Activated CD4-positive, alpha-beta T cell treated with anti-CD3 and anti-CD28 coated beads for 36 hours (primary cell): ENCODE measurements at regions of chr6 and their contacts with region 1.

Region 1: GRCh38 chr6:109382576-109383437 is 540 bp upstream of the CD164 start:
- DNase-seq: peak; percentile 95
- ATAC-seq: peak; percentile 67
- H3K4me3 Mint-ChIP-seq: peak overlapping the region; percentile 98
- H3K27ac Mint-ChIP-seq: peak overlapping the region; percentile 99
- H3K4me1 Mint-ChIP-seq: peaks cover 25% of the 10 kb centered on the region
- H3K27me3 Mint-ChIP-seq: no peaks in the 10 kb centered on the region

Region 2: GRCh38 chr6:107957909-107958688 is 1424.7 kb before region 1 on chr6 and contains the start of gene SEC63:
- CTCF ChIA-PET with region 1: no interaction called
- POLR2A ChIA-PET with region 1: no interaction called
- intact Hi-C with region 1: loop called in 1 of 2 experiments (anchors 1 kb)
- DNase-seq: peak; percentile 98
- ATAC-seq: peak; percentile 98
- H3K4me3 Mint-ChIP-seq: peak within 1 kb of the TSS; percentile 100
- H3K27ac Mint-ChIP-seq: peak within 1 kb of the TSS; percentile 99
- H3K4me1 Mint-ChIP-seq: peaks cover 36% of the 10 kb centered on the region
- H3K27me3 Mint-ChIP-seq: peaks cover 2% of the 10 kb centered on the region
- total RNA-seq, gene SEC63: 98.7 to 100 TPM

Region 3: GRCh38 chr6:108921547-108922361 is 461.1 kb before region 1 on chr6:
- CTCF ChIA-PET with region 1: no interaction called
- POLR2A ChIA-PET with region 1: interaction called, 3 read pairs
- intact Hi-C with region 1: loop called in 1 of 2 experiments (anchors 5 kb)
- DNase-seq: peak; percentile 58
- ATAC-seq: peak; percentile 91
- H3K4me3 Mint-ChIP-seq: no peak overlapping the region
- H3K27ac Mint-ChIP-seq: peak overlapping the region; percentile 26
- H3K4me1 Mint-ChIP-seq: peaks cover 33% of the 10 kb centered on the region
- H3K27me3 Mint-ChIP-seq: peaks cover 7% of the 10 kb centered on the region

Region 4: DNA sequence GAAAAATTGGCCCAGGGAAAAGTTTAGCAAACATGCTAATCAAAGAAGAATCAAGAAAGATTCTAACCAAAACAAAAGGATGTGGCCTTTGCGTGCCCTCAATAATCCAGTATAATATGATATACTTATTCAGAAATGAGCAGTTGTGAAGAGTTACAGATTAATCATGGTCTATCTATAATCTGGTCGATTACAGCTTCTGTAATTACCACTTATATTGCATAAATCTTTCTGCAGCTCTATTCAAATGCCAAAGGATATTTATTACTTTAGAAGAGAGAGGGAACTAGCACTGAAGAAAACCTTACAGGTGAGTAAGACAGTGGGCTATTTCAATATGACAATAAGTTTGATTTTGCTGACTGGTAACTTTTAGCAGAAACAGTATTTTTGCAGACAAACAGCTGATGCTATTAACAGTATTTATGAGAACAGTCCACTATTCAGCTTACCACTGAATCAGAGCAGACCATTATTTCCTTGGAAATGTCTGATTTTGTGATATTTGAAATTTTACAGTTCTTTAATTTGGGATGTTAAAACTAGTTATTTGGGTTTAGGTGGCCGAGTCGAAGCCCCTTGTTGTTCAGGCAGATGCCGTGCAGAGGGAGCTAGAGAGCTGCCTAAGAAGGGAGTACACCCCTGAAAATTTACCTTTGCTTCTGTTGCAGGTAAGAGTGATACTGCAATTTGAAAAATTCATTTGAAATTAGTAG is 195.2 kb before region 1 on chr6:
- CTCF ChIA-PET with region 1: interaction called, 71 read pairs
- POLR2A ChIA-PET with region 1: interaction called, 11 read pairs
- intact Hi-C with region 1: loop called (anchors 1 kb)
- DNase-seq: peak; percentile 75
- ATAC-seq: peak; percentile 81
- H3K4me3 Mint-ChIP-seq: no peak overlapping the region
- H3K27ac Mint-ChIP-seq: no peak overlapping the region
- H3K4me1 Mint-ChIP-seq: peaks cover 3% of the 10 kb centered on the region
- H3K27me3 Mint-ChIP-seq: peaks cover 18% of the 10 kb centered on the region

Region 5: DNA sequence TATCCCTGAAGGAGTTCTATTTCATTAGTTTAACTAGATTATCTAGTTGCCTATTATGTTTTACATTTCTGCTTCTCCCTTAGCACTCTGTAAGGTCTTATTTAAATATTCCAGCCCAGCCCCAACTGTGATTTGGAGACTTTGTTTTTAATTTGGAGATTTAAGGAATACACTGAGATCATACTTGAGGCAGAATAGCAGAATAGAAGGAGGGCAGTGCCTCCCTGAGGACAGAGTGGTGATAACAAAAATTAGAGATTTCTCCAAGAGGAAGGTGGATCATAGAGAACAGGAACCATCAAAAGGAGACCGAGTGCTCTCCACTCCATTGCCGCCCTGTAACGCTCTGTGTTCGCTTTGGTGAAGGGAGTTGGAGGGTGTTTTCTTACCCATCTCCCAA is 14.2 kb after region 1 on chr6:
- CTCF ChIA-PET with region 1: interaction called, 18 read pairs
- POLR2A ChIA-PET with region 1: interaction called, 4 read pairs
- intact Hi-C with region 1: no loop called
- DNase-seq: no peak
- ATAC-seq: no peak
- H3K4me3 Mint-ChIP-seq: no peak overlapping the region
- H3K27ac Mint-ChIP-seq: no peak overlapping the region
- H3K4me1 Mint-ChIP-seq: peaks cover 6% of the 10 kb centered on the region
- H3K27me3 Mint-ChIP-seq: no peaks in the 10 kb centered on the region

Region 6: GRCh38 chr6:109482905-109483735 is 100.3 kb after region 1 on chr6 and contains the start of gene ZBTB24:
- CTCF ChIA-PET with region 1: interaction called, 3 read pairs
- POLR2A ChIA-PET with region 1: interaction called, 3 read pairs
- intact Hi-C with region 1: loop called (anchors 1 kb)
- DNase-seq: peak; percentile 94
- ATAC-seq: peak; percentile 84
- H3K4me3 Mint-ChIP-seq: peak within 1 kb of the TSS; percentile 96
- H3K27ac Mint-ChIP-seq: peak within 1 kb of the TSS; percentile 94
- H3K4me1 Mint-ChIP-seq: peaks cover 43% of the 10 kb centered on the region
- H3K27me3 Mint-ChIP-seq: no peaks in the 10 kb centered on the region
- total RNA-seq, gene ZBTB24: 12.0 to 14.7 TPM

Region 7: GRCh38 chr6:109526905-109527628 is 144.3 kb after region 1 on chr6:
- CTCF ChIA-PET with region 1: no interaction called
- POLR2A ChIA-PET with region 1: no interaction called
- intact Hi-C with region 1: no loop called
- DNase-seq: peak; percentile 66
- ATAC-seq: peak; percentile 84
- H3K4me3 Mint-ChIP-seq: no peak overlapping the region
- H3K27ac Mint-ChIP-seq: no peak overlapping the region
- H3K4me1 Mint-ChIP-seq: no peaks in the 10 kb centered on the region
- H3K27me3 Mint-ChIP-seq: no peaks in the 10 kb centered on the region

Region 8: DNA sequence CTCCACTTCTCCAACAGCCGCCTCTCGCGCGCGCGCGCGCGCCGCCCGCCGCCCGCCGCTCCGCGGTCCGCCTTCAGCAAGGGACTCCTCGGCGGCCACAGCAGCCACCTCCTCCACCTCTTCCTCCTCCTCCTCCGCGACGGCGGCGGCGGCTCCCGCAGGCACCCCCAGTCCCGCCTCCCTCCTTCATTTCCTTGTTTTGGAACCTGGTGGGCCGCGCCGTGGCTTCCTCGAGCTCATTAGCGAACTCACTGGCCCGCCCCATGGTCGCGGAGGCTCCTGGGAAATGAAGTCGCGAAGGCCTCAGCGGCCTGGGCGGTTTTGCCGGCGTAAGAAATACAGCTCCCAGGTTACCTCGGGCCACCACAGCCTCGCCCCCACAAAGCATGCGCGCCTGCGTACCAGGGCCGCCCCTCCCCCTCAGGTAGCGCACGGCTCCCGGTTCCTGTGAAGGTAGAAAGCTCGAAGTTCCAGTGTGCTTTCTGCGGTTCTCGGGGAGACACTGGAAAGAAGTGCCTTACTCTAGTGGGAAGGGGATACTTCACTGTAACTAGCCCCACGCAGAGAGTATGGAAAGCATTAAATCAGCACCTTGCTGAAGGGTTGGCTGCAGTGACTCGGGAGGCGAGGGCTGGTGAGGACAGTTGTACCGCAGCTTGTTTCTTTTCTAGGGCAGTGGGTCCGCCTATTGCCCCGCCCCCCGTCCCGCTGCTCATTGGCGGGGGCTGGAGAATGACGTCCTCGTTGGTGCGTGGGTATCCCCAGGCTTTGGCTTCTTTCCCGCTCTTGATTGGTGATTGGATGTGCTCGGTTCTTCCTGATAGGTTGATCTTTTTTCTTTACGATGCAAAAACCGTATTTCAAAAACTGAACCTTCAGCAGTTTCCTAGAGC is 1432.7 kb after region 1 on chr6 and contains the start of gene CDK19:
- CTCF ChIA-PET with region 1: no interaction called
- POLR2A ChIA-PET with region 1: no interaction called
- intact Hi-C with region 1: loop called in 1 of 2 experiments (anchors 1 kb)
- DNase-seq: peak; percentile 99
- ATAC-seq: peak; percentile 85
- H3K4me3 Mint-ChIP-seq: peak within 1 kb of the TSS; percentile 88
- H3K27ac Mint-ChIP-seq: peak within 1 kb of the TSS; percentile 98
- H3K4me1 Mint-ChIP-seq: peaks cover 32% of the 10 kb centered on the region
- H3K27me3 Mint-ChIP-seq: no peaks in the 10 kb centered on the region
- total RNA-seq, gene CDK19: 14.7 to 15.7 TPM